Ovary (tissue), 10 donors: ENCODE measurements at regions of chr22 and their contacts with region 1.

Region 1: GRCh38 chr22:34866495-34867131 is 199.3 kb upstream of the ISX start:
- DNase-seq: no peak
- H3K4me3 ChIP-seq: no peak overlapping the region
- H3K27ac ChIP-seq: no peak overlapping the region
- H3K4me1 ChIP-seq: no peaks in the 10 kb centered on the region
- H3K27me3 ChIP-seq: no peaks in the 10 kb centered on the region
- CTCF ChIP-seq: no peak
- EP300 ChIP-seq: no peak
- POLR2A ChIP-seq: no peak

Region 2: DNA sequence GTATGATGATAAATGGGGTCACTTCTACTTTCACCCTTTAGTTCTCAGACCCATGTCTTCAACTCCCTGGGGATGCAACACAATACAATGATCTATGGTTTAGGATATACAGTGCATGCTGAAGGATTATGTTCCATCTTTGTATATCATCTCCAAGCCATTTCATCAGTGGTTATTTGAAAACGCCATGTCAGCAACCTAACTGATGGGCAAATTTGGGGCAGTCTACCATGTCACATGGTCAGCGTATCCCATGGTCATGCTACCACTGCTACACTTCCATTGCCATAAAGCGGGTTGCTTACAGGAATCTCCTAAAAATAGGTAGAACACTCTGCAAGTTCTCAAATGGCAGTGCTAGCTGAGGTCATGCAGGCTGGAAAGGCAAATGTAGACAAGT is 37.1 kb before region 1 on chr22:
- intact Hi-C with region 1: loop called in 1 of 4 experiments (anchors 2 kb)
- DNase-seq: no peak
- H3K4me3 ChIP-seq: no peak overlapping the region
- H3K27ac ChIP-seq: no peak overlapping the region
- H3K4me1 ChIP-seq: no peaks in the 10 kb centered on the region
- H3K27me3 ChIP-seq: no peaks in the 10 kb centered on the region
- CTCF ChIP-seq: no peak
- EP300 ChIP-seq: no peak
- POLR2A ChIP-seq: no peak

Region 3: GRCh38 chr22:34841331-34841771 is 25.3 kb before region 1 on chr22:
- intact Hi-C with region 1: no loop called
- DNase-seq: no peak
- H3K4me3 ChIP-seq: no peak overlapping the region
- H3K27ac ChIP-seq: no peak overlapping the region
- H3K4me1 ChIP-seq: no peaks in the 10 kb centered on the region
- H3K27me3 ChIP-seq: no peaks in the 10 kb centered on the region
- CTCF ChIP-seq: no peak
- EP300 ChIP-seq: no peak
- POLR2A ChIP-seq: no peak

Region 4: DNA sequence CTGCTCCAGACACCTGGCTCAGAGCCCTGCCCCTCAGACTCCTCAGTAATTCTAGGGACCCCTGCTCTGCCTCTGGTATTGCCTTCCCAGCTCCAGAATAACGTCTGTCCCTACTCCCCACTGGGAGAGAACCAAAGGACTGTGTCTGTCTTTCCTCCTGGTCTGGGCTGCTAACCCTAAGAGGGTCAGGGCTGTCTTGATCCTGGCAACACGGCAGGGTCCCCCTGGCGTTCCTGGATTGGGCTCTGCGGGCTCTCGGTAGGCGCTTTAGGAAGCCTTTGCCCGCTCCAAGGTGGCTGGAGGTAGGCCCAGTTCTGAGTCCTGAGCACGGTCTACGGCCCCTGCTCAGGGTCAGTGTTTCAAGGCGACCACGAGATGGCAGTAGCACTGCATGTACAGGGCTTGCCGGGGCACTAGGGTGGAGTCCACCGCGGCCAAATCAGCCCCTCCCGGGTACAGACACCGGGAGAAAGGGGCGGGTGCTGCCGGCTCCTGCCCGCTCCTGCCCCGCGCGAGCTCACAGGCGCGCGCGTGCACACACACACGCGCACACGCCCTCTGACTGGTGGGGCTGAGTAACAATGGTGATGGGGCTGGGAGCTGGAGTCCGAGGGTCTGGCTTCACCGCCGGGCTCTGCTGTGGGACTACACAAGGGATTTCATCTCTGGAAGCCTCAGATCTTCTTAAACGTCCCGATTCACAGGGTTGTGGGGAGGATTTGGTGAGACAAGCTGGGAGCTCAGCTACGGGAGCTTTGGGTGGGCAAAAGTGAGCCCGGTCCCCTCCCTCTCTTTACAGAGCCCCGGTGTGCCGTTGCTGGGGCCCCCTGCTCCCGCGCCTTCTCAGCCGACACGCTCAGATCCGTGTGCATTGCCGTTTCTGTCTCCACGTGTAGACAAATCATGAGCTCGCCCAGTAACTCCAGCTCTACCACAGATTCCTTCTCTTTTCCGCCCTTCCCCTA is 484.2 kb after region 1 on chr22:
- intact Hi-C with region 1: no loop called
- DNase-seq: peak; percentile 95 to 97 (median 95)
- H3K4me3 ChIP-seq: peak overlapping the region; percentile 42
- H3K27ac ChIP-seq: peak overlapping the region; percentile 53 to 92
- H3K4me1 ChIP-seq: peaks cover 9% of the 10 kb centered on the region
- H3K27me3 ChIP-seq: no peaks in the 10 kb centered on the region
- CTCF ChIP-seq: peak; percentile 96 to 97 (median 96)
- EP300 ChIP-seq: no peak
- POLR2A ChIP-seq: peak; percentile 55